Activated CD4-positive, alpha-beta memory T cell treated with anti-CD3 and anti-CD28 coated beads, Interleukin-2, amount 10 ng/mL, durations not matched to agents 7 days and 5 days (primary cell): ENCODE measurements at regions of chr5 and their contacts with region 1.

Region 1: DNA sequence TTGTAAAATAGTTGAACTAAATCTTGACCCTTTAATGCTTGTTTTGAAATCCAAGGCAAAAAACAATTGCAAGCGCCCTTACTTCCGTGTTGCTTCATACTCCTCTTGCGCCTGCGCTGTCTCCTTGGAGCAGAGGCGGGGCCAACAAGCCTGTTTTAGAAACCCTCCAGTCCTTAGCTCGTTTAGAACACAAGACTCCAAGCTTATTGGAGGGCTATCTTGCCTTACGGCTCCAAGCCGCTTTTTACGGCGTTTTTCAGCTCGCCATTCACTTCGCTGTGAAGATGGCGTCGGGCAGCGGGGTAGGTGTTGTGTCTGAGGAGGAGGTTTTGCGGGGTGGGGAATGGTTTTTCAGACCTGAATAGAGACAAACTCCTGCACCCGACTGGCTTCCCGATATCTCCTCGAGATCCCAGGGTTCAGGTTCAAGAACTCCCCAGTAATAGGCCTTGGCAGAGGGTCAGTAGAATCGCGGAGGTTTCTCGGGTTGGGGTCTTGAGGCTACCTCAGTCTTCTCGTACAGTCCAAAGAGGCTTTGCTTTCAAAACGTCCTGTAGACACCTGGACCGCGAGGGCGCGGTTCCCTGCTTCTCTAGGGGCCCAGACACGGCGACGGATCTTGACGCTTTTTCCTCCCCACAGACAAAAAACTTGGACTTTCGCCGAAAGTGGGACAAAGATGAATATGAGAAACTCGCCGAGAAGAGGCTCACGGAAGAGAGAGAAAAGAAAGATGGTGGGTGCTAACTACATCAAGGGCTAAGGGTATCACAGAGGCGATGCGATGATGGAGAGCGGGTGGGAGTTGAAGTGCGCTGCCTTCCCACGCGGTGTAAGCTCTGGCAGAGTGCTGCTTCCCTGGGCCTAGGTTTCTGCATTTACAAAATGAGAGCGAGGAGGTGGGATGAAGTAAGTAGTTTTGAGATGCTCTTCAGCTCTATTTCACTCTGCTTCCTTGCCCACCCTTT is at the start of gene ZMAT2:
- DNase-seq: peak; percentile 96
- H3K4me3 Mint-ChIP-seq: peak within 1 kb of the TSS; percentile 99
- H3K27ac Mint-ChIP-seq: peak within 1 kb of the TSS; percentile 85
- H3K4me1 Mint-ChIP-seq: peaks cover 28% of the 10 kb centered on the region
- H3K27me3 Mint-ChIP-seq: no peaks in the 10 kb centered on the region
- total RNA-seq, gene ZMAT2: 52.0 to 52.7 TPM

Region 2: GRCh38 chr5:140302786-140303639 is 397.4 kb before region 1 on chr5 and contains the start of gene PFDN1:
- CTCF ChIA-PET with region 1: no interaction called
- POLR2A ChIA-PET with region 1: no interaction called
- DNase-seq: peak; percentile 94
- H3K4me3 Mint-ChIP-seq: peak within 1 kb of the TSS; percentile 92
- H3K27ac Mint-ChIP-seq: peak within 1 kb of the TSS; percentile 80
- H3K4me1 Mint-ChIP-seq: peaks cover 40% of the 10 kb centered on the region
- H3K27me3 Mint-ChIP-seq: peaks cover 6% of the 10 kb centered on the region
- total RNA-seq, gene PFDN1: 52.3 to 55.8 TPM

Region 3: DNA sequence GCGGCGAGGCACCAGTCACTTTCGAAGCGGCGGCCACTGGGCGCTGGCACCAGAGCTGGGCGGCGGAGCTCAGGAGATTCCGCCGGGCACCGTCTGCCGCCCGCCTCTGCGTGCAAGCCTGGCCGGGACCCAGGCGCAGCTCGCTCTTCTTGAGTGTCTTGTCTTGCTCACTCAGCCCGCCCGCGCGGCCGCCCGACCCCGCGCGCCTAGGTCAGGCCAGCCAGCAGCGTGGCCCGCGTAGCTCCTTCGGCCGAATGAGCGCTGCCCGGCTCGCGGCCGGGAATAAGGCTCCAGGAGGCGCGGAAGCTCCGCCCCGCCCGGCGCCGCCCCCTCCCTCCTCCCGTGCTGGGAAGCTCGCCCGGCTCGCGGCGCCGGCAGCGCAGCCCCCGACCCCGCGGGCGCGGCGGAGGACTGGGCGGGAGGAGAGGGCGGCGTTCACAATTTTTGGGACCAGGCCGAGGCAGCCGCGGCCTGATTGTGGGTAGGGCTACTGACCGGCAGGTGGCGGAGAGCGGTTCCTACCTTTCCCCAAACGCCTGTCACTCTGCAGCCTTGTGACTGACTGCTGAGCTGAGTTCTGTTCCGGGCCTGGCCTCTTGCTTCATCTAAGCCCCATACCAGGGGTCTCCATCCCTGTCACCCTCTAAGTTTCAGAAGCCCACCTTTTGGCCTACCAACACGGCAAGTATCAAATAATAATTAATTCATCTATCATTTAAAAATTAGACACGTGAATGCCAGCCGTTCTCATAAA is 353.9 kb before region 1 on chr5 and contains the start of gene HBEGF:
- CTCF ChIA-PET with region 1: no interaction called
- POLR2A ChIA-PET with region 1: no interaction called
- DNase-seq: peak; percentile 63
- H3K4me3 Mint-ChIP-seq: peak within 1 kb of the TSS; percentile 96
- H3K27ac Mint-ChIP-seq: peak within 1 kb of the TSS; percentile 94
- H3K4me1 Mint-ChIP-seq: peaks cover 64% of the 10 kb centered on the region
- H3K27me3 Mint-ChIP-seq: peaks cover 3% of the 10 kb centered on the region
- total RNA-seq, gene HBEGF: 67.9 to 69.1 TPM

Region 4: DNA sequence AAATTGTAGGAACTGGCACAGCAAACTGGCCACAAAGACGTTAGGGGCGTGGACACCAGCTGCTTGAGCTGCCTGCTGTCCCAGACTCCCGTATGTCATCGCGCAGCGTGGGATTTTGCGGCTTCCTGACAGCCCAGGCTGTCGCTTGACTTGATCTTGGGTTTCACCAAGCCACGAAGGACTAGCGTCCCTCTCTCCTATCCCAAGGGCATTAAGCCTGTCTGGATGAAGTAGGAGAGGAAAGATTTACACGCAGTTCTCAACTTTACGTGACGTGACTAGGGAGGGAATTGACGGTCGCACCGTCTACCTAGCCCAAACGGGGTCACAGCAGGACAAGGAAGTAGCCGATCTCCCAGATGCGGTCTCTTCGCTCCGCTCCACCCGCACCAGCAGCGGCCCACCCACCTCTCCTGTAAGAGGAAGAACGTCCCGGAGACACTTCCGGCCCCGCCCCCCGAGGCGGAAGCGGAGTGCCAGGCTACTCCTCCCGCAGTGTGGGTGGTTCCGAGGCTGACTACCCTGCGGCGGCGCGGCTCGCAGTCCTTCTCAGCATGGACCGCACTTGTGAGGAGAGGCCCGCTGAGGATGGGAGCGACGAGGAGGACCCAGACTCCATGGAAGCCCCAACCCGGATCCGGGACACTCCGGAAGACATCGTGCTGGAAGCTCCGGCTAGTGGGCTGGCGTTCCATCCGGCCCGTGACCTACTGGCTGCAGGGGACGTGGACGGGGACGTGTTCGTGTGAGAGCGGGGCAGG is 35.9 kb before region 1 on chr5 and contains the start of gene WDR55:
- CTCF ChIA-PET with region 1: no interaction called
- POLR2A ChIA-PET with region 1: interaction called, 10 read pairs
- DNase-seq: peak; percentile 96
- H3K4me3 Mint-ChIP-seq: peak within 1 kb of the TSS; percentile 83
- H3K27ac Mint-ChIP-seq: peak within 1 kb of the TSS; percentile 91
- H3K4me1 Mint-ChIP-seq: peaks cover 37% of the 10 kb centered on the region
- H3K27me3 Mint-ChIP-seq: no peaks in the 10 kb centered on the region
- total RNA-seq, gene WDR55: 35.0 to 35.2 TPM

Region 5: DNA sequence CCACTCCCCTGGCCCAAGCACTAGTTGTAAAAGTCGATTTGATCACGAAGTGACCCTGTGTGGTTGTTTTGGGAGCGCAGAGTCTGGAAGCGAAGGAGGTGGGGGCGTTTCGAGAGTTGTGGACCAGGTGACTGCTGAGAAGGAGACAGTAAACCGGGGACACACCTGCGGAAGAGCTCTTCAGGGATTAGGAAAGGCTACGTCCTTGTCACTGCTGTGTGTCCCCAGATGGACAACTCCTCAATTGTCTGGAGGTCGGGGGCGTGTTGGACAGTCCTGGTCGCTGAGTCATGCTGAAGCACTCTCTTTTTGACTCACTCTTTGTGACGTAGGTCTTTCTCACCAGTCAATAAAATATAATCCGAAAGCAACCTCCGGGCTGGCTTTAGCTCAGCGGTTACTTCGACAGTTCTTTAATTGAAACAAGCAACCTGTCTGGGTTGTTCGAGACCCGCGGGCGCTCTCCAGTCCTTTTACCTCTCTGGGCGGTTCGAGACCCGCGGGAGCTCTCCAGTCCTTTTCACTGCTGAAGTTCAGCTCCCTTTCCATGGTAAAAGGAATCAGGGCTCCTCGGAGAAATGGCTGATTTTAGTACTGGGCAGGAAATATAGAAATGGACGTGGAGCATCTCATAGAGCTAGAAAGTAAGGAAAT is 10.6 kb after region 1 on chr5:
- CTCF ChIA-PET with region 1: interaction called, 13 read pairs
- POLR2A ChIA-PET with region 1: interaction called, 50 read pairs
- DNase-seq: peak; percentile 91
- H3K4me3 Mint-ChIP-seq: peak overlapping the region; percentile 80
- H3K27ac Mint-ChIP-seq: peak overlapping the region; percentile 90
- H3K4me1 Mint-ChIP-seq: peaks cover 23% of the 10 kb centered on the region
- H3K27me3 Mint-ChIP-seq: peaks cover 5% of the 10 kb centered on the region

Region 6: DNA sequence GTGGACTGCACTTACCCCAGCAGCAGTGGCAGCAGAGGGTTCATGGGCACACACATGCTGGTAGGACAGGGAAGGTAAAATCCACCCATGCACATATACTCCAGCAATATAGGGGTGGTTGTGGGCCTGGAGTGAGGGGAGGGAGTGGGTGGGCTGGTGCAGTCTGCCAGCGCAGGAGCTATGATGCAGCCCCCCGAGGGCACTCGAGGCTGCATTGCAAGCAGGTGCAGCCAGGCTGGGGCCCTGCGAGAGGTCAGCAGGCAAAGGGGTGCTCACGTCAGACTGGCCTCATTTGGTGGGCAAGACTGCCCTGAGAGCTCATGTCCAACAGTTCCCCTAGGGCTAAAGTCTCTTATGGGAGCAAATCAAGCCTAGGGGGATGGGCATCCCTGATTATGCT is 53.1 kb after region 1 on chr5:
- CTCF ChIA-PET with region 1: no interaction called
- POLR2A ChIA-PET with region 1: no interaction called
- DNase-seq: no peak
- H3K4me3 Mint-ChIP-seq: no peak overlapping the region
- H3K27ac Mint-ChIP-seq: no peak overlapping the region
- H3K4me1 Mint-ChIP-seq: no peaks in the 10 kb centered on the region
- H3K27me3 Mint-ChIP-seq: no peaks in the 10 kb centered on the region

Region 7: GRCh38 chr5:140926443-140927227 is 226.2 kb after region 1 on chr5:
- CTCF ChIA-PET with region 1: no interaction called
- POLR2A ChIA-PET with region 1: no interaction called
- DNase-seq: no peak
- H3K4me3 Mint-ChIP-seq: no peak overlapping the region
- H3K27ac Mint-ChIP-seq: no peak overlapping the region
- H3K4me1 Mint-ChIP-seq: peaks cover 1% of the 10 kb centered on the region
- H3K27me3 Mint-ChIP-seq: peaks cover 21% of the 10 kb centered on the region